Right ventricle myocardium inferior (tissue), 1 donor: ENCODE measurements at regions of chr11 and their contacts with region 1.

Region 1: DNA sequence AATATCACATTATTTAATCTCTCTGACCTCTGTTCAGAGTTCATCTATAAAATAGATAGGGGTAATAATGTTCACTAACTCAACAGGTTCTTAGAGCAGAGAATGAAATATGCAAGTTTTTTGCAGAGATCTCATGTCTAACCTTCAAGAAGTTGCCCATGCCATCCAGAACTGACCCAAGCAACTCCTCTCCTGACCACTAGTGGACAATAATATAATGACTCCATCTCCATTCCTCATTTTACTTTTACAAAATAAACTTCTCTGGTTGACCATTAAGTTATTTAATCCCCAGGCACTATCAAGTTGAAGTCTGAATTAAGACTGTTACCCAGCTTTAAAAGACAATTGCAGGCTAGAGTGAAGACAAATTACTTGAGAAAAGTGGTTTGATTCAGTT is 382.6 kb downstream of the KCNA4 start:
- DNase-seq: no peak
- ATAC-seq: no peak

Region 2: DNA sequence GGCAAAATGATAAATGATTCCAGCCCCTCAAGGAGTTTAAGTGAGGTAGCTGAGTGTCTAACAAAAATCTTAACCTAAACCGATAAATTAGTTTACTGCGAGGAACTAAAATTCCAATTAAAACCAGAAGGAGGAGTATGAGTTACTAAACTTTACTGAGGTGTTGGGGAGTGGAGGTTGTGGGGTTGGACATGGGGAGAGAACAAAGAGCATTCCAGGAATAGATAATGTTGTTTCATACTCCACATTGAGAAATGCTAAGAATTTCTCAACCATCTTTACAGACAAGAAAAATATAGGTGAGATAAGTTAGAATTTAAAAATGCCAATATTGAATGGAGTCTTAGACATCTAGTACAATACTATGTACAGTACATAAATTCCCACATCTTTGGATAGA is 1037.4 kb before region 1 on chr11:
- intact Hi-C with region 1: no loop called
- DNase-seq: no peak
- ATAC-seq: no peak

Region 3: GRCh38 chr11:29527391-29527936 is 106.8 kb before region 1 on chr11:
- intact Hi-C with region 1: loop called (anchors 10 kb)
- DNase-seq: no peak
- ATAC-seq: peak; percentile 50